GM12878 (cell line): ENCODE measurements at regions of chr9 and their contacts with region 1.

Region 1: GRCh38 chr9:37293664-37294524 is 128.6 kb upstream of the GRHPR start:
- DNase-seq: peak; percentile 91
- ATAC-seq: peak; percentile 73
- H3K4me3 ChIP-seq: no peak overlapping the region
- H3K27ac ChIP-seq: peak overlapping the region; percentile 90
- H3K4me1 ChIP-seq: peaks cover 60% of the 10 kb centered on the region
- H3K27me3 ChIP-seq: no peaks in the 10 kb centered on the region
- CTCF ChIP-seq: no peak
- EP300 ChIP-seq: peak; percentile 95 to 96
- POLR2A ChIP-seq: no peak
- RAD21 ChIP-seq: no peak

Region 2: GRCh38 chr9:37209431-37210386 is 84.2 kb before region 1 on chr9:
- CTCF ChIA-PET with region 1: interaction called, 6 read pairs
- POLR2A ChIA-PET with region 1: no interaction called
- RAD21 ChIA-PET with region 1: interaction called, 13 read pairs
- SMC1A ChIA-PET with region 1: interaction called, 10 read pairs
- in situ Hi-C with region 1: no loop called
- intact Hi-C with region 1: loop called (anchors 5 kb)
- DNase-seq: no peak
- ATAC-seq: peak; percentile 51
- H3K4me3 ChIP-seq: no peak overlapping the region
- H3K27ac ChIP-seq: peak overlapping the region; percentile 73
- H3K4me1 ChIP-seq: peaks cover 31% of the 10 kb centered on the region
- H3K27me3 ChIP-seq: no peaks in the 10 kb centered on the region
- CTCF ChIP-seq: peak in 2 of 3 experiments; percentile 16 to 21; a peak in 3 of 6 replicates
- EP300 ChIP-seq: no peak
- POLR2A ChIP-seq: no peak
- RAD21 ChIP-seq: peak; percentile 22; the same call in 1 of the 2 replicates

Region 3: GRCh38 chr9:37215830-37216229 is 78.1 kb before region 1 on chr9:
- CTCF ChIA-PET with region 1: no interaction called
- POLR2A ChIA-PET with region 1: no interaction called
- RAD21 ChIA-PET with region 1: no interaction called
- SMC1A ChIA-PET with region 1: interaction called, 10 read pairs
- in situ Hi-C with region 1: no loop called
- intact Hi-C with region 1: loop called (anchors 5 kb)
- DNase-seq: no peak
- ATAC-seq: no peak
- H3K4me3 ChIP-seq: no peak overlapping the region
- H3K27ac ChIP-seq: no peak overlapping the region
- H3K4me1 ChIP-seq: peaks cover 3% of the 10 kb centered on the region
- H3K27me3 ChIP-seq: no peaks in the 10 kb centered on the region
- CTCF ChIP-seq: no peak
- EP300 ChIP-seq: no peak
- POLR2A ChIP-seq: no peak
- RAD21 ChIP-seq: no peak

Region 4: DNA sequence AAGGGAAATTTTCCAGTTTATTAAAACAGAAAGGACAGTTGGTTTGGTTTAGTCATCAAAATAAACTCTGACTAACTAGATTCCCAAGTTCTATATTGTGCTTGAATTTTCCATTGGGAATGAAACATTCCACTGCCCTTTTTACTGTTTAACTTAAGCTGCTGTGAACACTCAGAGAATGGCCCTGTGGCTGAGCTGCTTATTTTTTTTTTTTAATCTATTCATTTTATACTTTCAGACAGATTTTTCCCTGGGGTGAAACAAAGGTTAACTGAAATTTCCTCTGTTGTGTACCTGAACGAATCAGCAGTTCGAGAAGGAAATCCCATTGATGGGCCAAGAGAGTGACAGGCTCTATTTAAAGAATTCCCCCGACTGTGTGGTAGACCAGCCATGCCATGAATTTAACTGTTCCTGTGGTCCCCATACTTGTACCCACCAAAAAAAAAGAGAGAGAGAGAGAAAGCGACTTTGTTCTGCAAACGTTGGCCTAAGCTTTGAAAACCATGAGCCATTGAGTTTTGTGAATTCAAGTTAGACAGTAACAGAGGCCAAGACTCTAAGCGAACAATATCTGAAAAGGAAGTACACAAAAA is 10.1 kb before region 1 on chr9:
- CTCF ChIA-PET with region 1: interaction called, 18 read pairs
- POLR2A ChIA-PET with region 1: interaction called, 7 read pairs
- RAD21 ChIA-PET with region 1: interaction called, 104 read pairs
- SMC1A ChIA-PET with region 1: interaction called, 19 read pairs
- in situ Hi-C with region 1: no loop called
- intact Hi-C with region 1: no loop called
- DNase-seq: peak; percentile 72
- ATAC-seq: peak; percentile 63
- H3K4me3 ChIP-seq: peak overlapping the region; percentile 57
- H3K27ac ChIP-seq: peak overlapping the region; percentile 84
- H3K4me1 ChIP-seq: peaks cover 13% of the 10 kb centered on the region
- H3K27me3 ChIP-seq: no peaks in the 10 kb centered on the region
- CTCF ChIP-seq: no peak
- EP300 ChIP-seq: 0 out of 4 replicates have a peak, but pooled peaks of 1 of the 2 experiments have one; percentile 37
- POLR2A ChIP-seq: no peak
- RAD21 ChIP-seq: no peak

Region 5: DNA sequence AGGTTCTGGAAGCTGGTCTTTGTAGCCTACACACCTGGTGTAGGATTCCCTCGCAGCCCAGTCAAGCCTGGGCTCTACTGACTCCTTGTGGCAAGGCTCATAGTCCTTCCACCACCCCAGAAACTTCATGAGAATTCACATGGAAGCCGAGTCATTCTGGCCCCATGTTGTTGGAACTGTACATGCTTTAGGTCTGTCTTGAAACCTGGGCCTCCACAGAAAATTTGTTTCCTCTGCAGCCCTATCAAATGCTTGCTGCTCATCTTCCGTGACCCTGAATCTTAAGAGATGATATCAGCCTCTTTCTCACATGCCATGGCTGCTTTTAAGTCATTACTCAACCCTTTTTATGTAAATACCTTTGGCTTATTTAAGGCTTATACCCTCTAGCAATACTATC is 15.2 kb after region 1 on chr9:
- CTCF ChIA-PET with region 1: interaction called, 3 read pairs
- POLR2A ChIA-PET with region 1: no interaction called
- RAD21 ChIA-PET with region 1: interaction called, 3 read pairs
- SMC1A ChIA-PET with region 1: interaction called, 26 read pairs
- in situ Hi-C with region 1: no loop called
- intact Hi-C with region 1: no loop called
- DNase-seq: no peak
- ATAC-seq: peak; percentile 91
- H3K4me3 ChIP-seq: no peak overlapping the region
- H3K27ac ChIP-seq: peak overlapping the region; percentile 22
- H3K4me1 ChIP-seq: peaks cover 11% of the 10 kb centered on the region
- H3K27me3 ChIP-seq: no peaks in the 10 kb centered on the region
- CTCF ChIP-seq: peak; percentile 55 to 62 (median 58)
- EP300 ChIP-seq: no peak
- POLR2A ChIP-seq: no peak
- RAD21 ChIP-seq: peak; percentile 83

Region 6: GRCh38 chr9:37382161-37382981 is 88.5 kb after region 1 on chr9:
- CTCF ChIA-PET with region 1: no interaction called
- POLR2A ChIA-PET with region 1: no interaction called
- RAD21 ChIA-PET with region 1: no interaction called
- SMC1A ChIA-PET with region 1: interaction called, 4 read pairs
- in situ Hi-C with region 1: no loop called
- intact Hi-C with region 1: loop called (anchors 2 kb)
- DNase-seq: peak; percentile 70
- ATAC-seq: peak; percentile 57
- H3K4me3 ChIP-seq: no peak overlapping the region
- H3K27ac ChIP-seq: peak overlapping the region; percentile 92
- H3K4me1 ChIP-seq: peaks cover 65% of the 10 kb centered on the region
- H3K27me3 ChIP-seq: no peaks in the 10 kb centered on the region
- CTCF ChIP-seq: no peak
- EP300 ChIP-seq: peak; percentile 75 to 80
- POLR2A ChIP-seq: no peak
- RAD21 ChIP-seq: peak; percentile 9; the same call in 1 of the 2 replicates

Region 7: DNA sequence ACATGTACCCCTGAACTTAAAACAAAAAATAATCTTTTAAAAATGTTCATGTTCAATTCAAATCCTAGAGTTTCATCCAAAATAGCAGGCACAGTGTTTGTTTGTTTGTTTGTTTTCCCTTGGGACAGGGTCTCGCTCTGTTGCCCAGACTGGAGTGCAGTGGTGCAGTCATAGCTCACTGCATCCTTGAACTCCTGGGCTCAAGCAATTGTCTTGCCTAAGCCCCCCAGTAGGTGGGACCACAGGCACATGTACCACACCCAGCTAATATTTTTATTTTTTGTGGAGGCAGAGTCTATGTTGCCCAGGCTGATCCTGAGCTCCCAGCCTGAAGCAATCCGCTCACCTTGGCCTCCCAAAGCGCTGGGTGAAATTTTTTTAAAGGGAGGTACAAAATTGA is 186.9 kb after region 1 on chr9:
- CTCF ChIA-PET with region 1: no interaction called
- POLR2A ChIA-PET with region 1: no interaction called
- RAD21 ChIA-PET with region 1: no interaction called
- SMC1A ChIA-PET with region 1: no interaction called
- in situ Hi-C with region 1: no loop called
- intact Hi-C with region 1: no loop called
- DNase-seq: no peak
- ATAC-seq: no peak
- H3K4me3 ChIP-seq: no peak overlapping the region
- H3K27ac ChIP-seq: no peak overlapping the region
- H3K4me1 ChIP-seq: peaks cover 5% of the 10 kb centered on the region; the same call in 1 of the 2 replicates
- H3K27me3 ChIP-seq: peaks cover 0 to 2% of the 10 kb centered on the region in 2 experiments; a peak in 1 of 4 replicates
- CTCF ChIP-seq: no peak
- EP300 ChIP-seq: no peak
- POLR2A ChIP-seq: no peak
- RAD21 ChIP-seq: peak; percentile 25; the same call in 1 of the 2 replicates